K562 (cell line): ENCODE measurements at regions of chr5 and their contacts with region 1.

Region 1: DNA sequence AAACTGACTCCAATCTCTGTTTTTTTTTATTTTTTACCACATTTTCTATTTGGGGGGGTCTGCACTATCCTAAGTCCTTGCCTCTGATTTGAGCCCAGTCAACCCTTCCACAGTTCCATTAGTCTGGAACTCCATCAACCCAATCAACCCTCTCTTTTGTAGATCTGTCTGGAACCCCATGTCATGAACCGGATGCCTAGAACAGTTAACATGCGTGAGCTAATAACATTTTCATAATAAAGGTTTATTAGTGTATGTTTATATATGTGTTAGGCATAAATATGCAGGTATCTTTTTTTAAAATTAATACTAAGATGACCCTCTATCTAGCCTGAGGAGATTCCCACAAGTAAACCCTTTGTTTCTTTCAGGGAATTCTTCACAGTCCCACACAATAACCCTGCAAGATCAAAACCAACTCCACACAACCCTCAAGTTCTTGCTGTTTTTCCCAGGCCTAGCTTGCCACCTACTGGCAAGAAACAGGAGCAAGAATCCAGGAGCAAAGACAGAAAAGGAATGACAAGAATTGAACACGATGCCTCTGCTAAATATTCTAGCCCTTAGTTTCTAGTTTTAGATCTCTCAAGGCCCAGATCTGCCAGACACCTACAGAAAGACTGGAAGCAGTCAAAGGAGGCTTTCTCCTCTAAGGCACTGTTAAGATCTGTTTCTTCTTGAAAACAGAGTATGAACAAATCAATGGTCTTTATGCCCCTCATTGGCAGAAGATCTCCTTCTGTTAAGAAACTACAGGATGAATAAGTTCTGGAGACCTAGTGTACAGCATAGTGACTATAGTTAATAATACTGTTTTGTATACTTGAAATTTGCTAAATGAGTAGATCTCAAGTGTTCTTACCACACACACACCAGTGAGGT is 100.4 kb downstream of the TRIM36 start:
- DNase-seq: peak in 2 of 4 experiments; percentile 17 to 46
- ATAC-seq: peak; percentile 78
- H3K4me3 ChIP-seq: no peak overlapping the region
- H3K27ac ChIP-seq: no peak overlapping the region
- H3K4me1 ChIP-seq: no peaks in the 10 kb centered on the region
- H3K27me3 ChIP-seq: no peaks in the 10 kb centered on the region
- CTCF ChIP-seq: peak; percentile 53 to 64 (median 57); a peak in 4 of 6 replicates
- EP300 ChIP-seq: no peak
- POLR2A ChIP-seq: no peak
- RAD21 ChIP-seq: peak; percentile 49 to 73

Region 2: GRCh38 chr5:114449860-114450421 is 619.4 kb before region 1 on chr5:
- CTCF ChIA-PET with region 1: no interaction called
- POLR2A ChIA-PET with region 1: no interaction called
- in situ Hi-C with region 1: no loop called
- intact Hi-C with region 1: loop called (anchors 5 kb)
- DNase-seq: peak; percentile 8 to 10 (median 10)
- ATAC-seq: peak; percentile 56; the same call in 2 of the 3 replicates
- H3K4me3 ChIP-seq: no peak overlapping the region
- H3K27ac ChIP-seq: no peak overlapping the region
- H3K4me1 ChIP-seq: no peaks in the 10 kb centered on the region
- H3K27me3 ChIP-seq: no peaks in the 10 kb centered on the region
- CTCF ChIP-seq: peak in 2 of 3 experiments; percentile 17 to 28; a peak in 2 of 6 replicates
- EP300 ChIP-seq: no peak
- POLR2A ChIP-seq: no peak
- RAD21 ChIP-seq: peak; percentile 32 to 51

Region 3: GRCh38 chr5:114935490-114935889 is 133.8 kb before region 1 on chr5:
- CTCF ChIA-PET with region 1: no interaction called
- POLR2A ChIA-PET with region 1: no interaction called
- in situ Hi-C with region 1: no loop called
- intact Hi-C with region 1: no loop called
- DNase-seq: no peak
- ATAC-seq: no peak
- H3K4me3 ChIP-seq: no peak overlapping the region
- H3K27ac ChIP-seq: no peak overlapping the region
- H3K4me1 ChIP-seq: no peaks in the 10 kb centered on the region
- H3K27me3 ChIP-seq: no peaks in the 10 kb centered on the region
- CTCF ChIP-seq: no peak
- EP300 ChIP-seq: no peak
- POLR2A ChIP-seq: no peak
- RAD21 ChIP-seq: no peak